ENCODE measurements at regions of chr14 and their contacts with region 1.

Region 1: GRCh38 chr14:35808076-35808652 is 931 bp downstream of the RALGAPA1 start:
- DNase-seq: no peak
- H3K4me3 ChIP-seq: peak overlapping the region; percentile 83
- H3K27me3 ChIP-seq: no peaks in the 10 kb centered on the region
- CTCF ChIP-seq: no peak

Region 2: GRCh38 chr14:35818346-35819115 is 10.4 kb after region 1 on chr14:
- CTCF ChIA-PET with region 1: interaction called, 15 read pairs
- POLR2A ChIA-PET with region 1: no interaction called
- DNase-seq: no peak
- H3K4me3 ChIP-seq: no peak overlapping the region
- H3K27me3 ChIP-seq: no peaks in the 10 kb centered on the region; the same call in 1 of the 2 replicates
- CTCF ChIP-seq: peak; percentile 60